A673 (cell line): ENCODE measurements at regions of chr3 and their contacts with region 1.

Region 1: GRCh38 chr3:47930979-47931378 is 85.2 kb downstream of the MAP4 start:
- DNase-seq: no peak
- H3K4me3 ChIP-seq: no peak overlapping the region
- H3K27ac ChIP-seq: no peak overlapping the region
- H3K4me1 ChIP-seq: peaks cover 8% of the 10 kb centered on the region
- H3K27me3 ChIP-seq: no peaks in the 10 kb centered on the region
- CTCF ChIP-seq: no peak

Region 2: GRCh38 chr3:47964740-47965139 is 33.8 kb after region 1 on chr3:
- CTCF ChIA-PET with region 1: no interaction called
- POLR2A ChIA-PET with region 1: interaction called, 10 read pairs
- intact Hi-C with region 1: no loop called
- DNase-seq: no peak
- H3K4me3 ChIP-seq: no peak overlapping the region
- H3K27ac ChIP-seq: no peak overlapping the region
- H3K4me1 ChIP-seq: peaks cover 28% of the 10 kb centered on the region
- H3K27me3 ChIP-seq: no peaks in the 10 kb centered on the region
- CTCF ChIP-seq: no peak

Region 3: DNA sequence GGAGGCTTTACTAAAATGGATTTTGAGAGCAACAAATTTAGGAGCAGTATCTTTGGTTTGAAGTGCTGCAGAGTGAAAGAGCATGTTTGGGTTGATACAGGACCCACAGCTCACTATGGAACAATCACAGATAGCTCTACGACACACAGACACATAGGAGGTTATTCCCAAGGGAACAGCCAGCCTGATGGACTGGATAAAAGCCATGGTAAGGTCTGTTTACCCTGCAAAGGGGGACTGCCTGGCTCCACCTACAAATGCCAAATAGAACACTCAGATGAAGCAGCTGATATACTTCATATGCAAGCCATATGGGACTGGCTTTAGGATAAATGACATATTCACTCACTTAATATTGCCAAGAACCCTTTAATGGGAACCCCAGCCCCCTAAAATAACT is 181.8 kb after region 1 on chr3:
- CTCF ChIA-PET with region 1: no interaction called
- POLR2A ChIA-PET with region 1: interaction called, 16 read pairs
- intact Hi-C with region 1: no loop called
- DNase-seq: no peak
- H3K4me3 ChIP-seq: no peak overlapping the region
- H3K27ac ChIP-seq: no peak overlapping the region
- H3K4me1 ChIP-seq: no peaks in the 10 kb centered on the region
- H3K27me3 ChIP-seq: no peaks in the 10 kb centered on the region
- CTCF ChIP-seq: no peak